Left cardiac atrium (tissue), 4 donors: ENCODE measurements at regions of chr4 and their contacts with region 1.

Region 1: DNA sequence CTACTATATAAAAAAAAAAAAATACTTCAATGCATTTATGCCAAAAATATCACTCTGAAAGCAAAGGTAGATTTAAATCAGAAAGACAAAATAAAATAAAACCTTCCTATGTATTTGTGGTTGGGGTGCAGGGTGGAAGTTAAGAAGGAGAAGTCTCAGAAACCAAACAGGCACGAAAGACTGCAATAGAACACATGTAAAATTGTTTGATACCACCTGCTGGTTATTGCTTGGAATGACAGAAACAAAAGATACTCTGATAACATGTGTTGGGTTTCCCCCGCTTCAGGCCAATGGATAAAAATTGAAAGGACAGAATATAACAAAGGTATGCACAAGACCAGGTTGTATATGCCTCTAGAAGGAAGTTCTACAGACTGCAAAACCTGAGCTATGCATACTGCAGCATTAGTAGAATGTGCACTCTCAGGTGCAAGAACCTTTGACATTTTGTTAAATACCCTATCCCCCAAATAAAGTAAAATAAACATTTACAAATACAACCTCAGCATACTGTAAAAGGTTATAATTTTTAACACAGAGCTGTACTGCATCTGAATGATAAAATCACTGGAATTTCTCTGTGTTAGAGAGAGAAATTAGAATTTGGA is 118.8 kb downstream of the GABRA2 start:
- DNase-seq: no peak
- ATAC-seq: no peak

Region 2: DNA sequence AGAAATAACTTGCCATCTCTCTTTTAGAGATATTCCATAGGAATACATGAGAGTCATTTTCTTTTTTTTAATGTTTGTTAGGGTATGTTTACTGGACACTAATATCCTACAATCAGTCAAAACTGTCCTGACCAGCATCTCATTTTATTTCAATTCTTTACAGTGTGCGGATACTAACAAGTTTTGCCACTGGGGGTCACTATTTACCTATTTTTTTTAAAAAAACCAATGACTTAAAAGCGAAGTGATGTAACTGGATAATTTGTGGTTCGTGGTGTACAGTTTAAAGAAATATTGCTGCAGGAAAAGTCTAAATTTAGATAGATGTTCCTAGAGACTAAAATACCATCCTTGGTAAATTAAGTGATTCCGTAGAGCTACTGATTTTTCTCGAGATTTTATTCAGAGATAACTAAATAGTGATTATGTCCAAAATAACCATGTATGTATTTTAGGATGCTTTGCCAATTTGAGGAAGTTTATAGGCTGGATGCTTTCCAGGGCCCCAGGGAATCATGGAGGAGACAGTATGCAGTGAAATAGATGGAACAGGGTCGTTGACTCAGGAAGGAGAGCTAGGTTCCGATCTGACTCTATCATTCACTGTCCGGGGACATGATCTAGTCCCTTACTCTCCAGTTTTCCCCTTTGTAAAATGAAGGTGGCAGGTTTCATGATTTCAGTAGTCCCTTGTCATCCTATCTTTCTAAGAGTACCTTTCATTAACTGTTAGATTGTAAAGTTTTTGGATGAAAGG is 1510.8 kb before region 1 on chr4:
- intact Hi-C with region 1: loop called in 1 of 2 experiments (anchors 5 kb)
- DNase-seq: no peak
- ATAC-seq: peak; percentile 50 to 73

Region 3: GRCh38 chr4:44927399-44928380 is 1343.4 kb before region 1 on chr4:
- intact Hi-C with region 1: loop called in 1 of 2 experiments (anchors 5 kb)
- DNase-seq: no peak
- ATAC-seq: no peak

Region 4: DNA sequence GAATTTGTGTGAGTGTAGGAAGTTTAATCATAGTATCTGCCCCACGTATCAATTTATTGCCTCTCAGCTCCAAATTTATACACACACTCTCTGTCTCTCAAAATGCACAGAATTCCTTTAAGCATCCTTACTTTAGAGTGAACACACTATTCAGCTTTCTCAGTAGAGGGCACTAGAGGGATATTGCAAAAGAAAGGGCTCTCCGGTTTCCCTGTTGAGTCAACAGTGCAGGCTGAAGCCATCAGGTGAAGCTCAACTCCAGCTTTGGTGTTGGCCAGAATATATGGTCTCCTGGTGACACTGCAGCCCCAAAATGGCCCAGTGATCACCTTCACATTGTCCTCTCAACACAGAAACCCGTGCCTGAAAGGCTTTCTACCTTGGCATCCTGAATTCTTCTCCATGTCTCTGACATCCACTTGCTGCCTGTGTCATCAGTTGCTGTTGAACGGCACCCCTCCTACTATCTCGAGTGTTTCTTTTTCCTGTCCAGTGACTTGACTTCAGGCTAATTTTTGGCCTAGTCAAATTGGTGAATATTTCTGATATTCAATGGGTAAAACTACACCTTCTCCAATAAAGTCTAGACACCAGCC is 817.7 kb before region 1 on chr4:
- intact Hi-C with region 1: loop called in 1 of 2 experiments (anchors 5 kb)
- DNase-seq: no peak
- ATAC-seq: peak in 1 of 2 donors; percentile 56

Region 5: GRCh38 chr4:45550766-45551366 is 720.2 kb before region 1 on chr4:
- intact Hi-C with region 1: loop called in 1 of 2 experiments (anchors 2 kb)
- DNase-seq: no peak
- ATAC-seq: no peak